Activated CD4-positive, alpha-beta T cell treated with anti-CD3 and anti-CD28 coated beads, Interleukin-2, amount 10 ng/mL, durations not matched to agents 24 days and 14 days (primary cell): ENCODE measurements at regions of chr6 and their contacts with region 1.

Region 1: DNA sequence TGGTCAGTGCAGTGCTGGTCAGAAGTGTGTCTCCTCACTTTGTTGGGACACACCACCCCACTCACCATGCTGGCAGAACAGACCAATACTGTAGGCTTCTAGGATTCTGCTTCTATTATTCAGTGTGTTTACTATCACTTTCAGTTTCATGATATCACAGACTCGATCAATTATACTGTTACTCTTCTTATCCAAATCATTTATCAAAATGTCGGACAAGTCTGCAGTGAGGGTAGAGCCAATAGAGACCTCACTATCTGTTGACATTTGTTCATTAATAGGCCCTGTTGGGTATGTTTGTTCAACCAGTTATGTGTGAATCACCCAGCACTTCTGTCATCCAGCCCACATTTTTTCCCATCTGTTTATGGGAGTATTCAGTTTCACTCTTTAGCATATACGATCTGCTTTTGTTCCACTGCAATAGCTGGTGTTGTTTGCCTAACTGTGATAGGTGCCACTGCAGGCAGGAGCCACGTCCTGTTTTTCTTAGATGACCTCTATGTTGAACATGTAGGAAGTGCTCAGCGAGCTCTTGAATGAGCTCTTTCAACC is 140.1 kb downstream of the NRN1 start:
- DNase-seq: peak; percentile 71
- H3K4me3 Mint-ChIP-seq: peak overlapping the region; percentile 76
- H3K27ac Mint-ChIP-seq: peak overlapping the region; percentile 85
- H3K4me1 Mint-ChIP-seq: peaks cover 37% of the 10 kb centered on the region
- H3K27me3 Mint-ChIP-seq: no peaks in the 10 kb centered on the region

Region 2: GRCh38 chr6:5584078-5584482 is 282.5 kb before region 1 on chr6:
- intact Hi-C with region 1: no loop called
- DNase-seq: no peak
- H3K4me3 Mint-ChIP-seq: no peak overlapping the region
- H3K27ac Mint-ChIP-seq: no peak overlapping the region
- H3K4me1 Mint-ChIP-seq: peaks cover 9% of the 10 kb centered on the region
- H3K27me3 Mint-ChIP-seq: no peaks in the 10 kb centered on the region

Region 3: GRCh38 chr6:5626727-5627426 is 239.7 kb before region 1 on chr6:
- intact Hi-C with region 1: loop called (anchors 10 kb)
- DNase-seq: peak; percentile 70
- H3K4me3 Mint-ChIP-seq: peak overlapping the region; percentile 62
- H3K27ac Mint-ChIP-seq: peak overlapping the region; percentile 61
- H3K4me1 Mint-ChIP-seq: peaks cover 23% of the 10 kb centered on the region
- H3K27me3 Mint-ChIP-seq: peaks cover 5% of the 10 kb centered on the region

Region 4: GRCh38 chr6:5814116-5814515 is 52.5 kb before region 1 on chr6:
- intact Hi-C with region 1: no loop called
- DNase-seq: no peak
- H3K4me3 Mint-ChIP-seq: no peak overlapping the region
- H3K27ac Mint-ChIP-seq: no peak overlapping the region
- H3K4me1 Mint-ChIP-seq: peaks cover 13% of the 10 kb centered on the region
- H3K27me3 Mint-ChIP-seq: peaks cover 4% of the 10 kb centered on the region

Region 5: DNA sequence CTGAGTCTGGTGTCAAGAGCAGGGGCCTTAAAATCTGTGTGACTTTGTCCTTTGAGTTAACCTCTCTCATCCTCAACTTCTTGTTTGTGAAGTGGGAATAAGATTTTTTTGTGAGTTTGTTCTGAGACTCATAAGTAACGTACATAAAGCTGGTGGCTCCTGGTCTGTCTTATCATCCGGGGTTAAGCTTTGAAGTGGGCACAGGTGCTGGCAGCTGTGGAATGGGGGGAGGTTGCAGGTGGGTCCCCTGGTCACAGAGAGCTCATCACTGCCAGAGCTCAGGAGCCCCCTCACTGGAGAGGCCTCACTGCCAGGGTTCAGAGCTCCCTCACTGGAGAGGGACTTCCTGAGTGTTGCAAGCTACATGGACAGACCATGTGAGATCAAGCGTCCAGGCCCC is 34.0 kb before region 1 on chr6:
- intact Hi-C with region 1: loop called (anchors 5 kb)
- DNase-seq: no peak
- H3K4me3 Mint-ChIP-seq: peak overlapping the region; percentile 40
- H3K27ac Mint-ChIP-seq: peak overlapping the region; percentile 90
- H3K4me1 Mint-ChIP-seq: peaks cover 29% of the 10 kb centered on the region
- H3K27me3 Mint-ChIP-seq: no peaks in the 10 kb centered on the region

Region 6: DNA sequence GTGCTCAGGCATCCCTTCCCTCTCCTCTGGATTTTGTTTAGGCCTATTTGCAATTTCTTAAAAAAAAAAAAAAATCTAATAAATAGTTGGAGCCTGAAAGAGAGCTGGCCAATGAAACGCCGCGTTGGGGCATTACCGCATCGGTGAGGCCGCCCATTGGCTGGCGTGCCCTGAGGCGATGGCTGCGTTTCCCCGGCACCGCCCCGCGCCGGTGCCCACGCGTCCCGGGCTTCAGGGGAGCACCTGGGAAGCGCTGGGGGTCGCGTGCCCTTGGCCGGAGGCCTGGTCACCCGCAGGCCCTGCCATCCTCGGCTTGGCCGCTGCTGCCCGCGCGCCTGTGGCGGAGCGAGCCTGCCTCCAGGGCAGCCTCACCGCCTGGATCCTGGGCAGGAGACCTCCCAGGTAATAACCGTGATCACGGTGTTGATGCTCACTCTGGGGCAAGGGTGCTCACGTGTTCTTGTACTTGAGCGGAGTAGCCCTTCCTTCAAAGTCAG is 15.3 kb before region 1 on chr6:
- intact Hi-C with region 1: loop called (anchors 2 kb)
- DNase-seq: peak; percentile 91
- H3K4me3 Mint-ChIP-seq: peak overlapping the region; percentile 78
- H3K27ac Mint-ChIP-seq: no peak overlapping the region
- H3K4me1 Mint-ChIP-seq: peaks cover 9% of the 10 kb centered on the region
- H3K27me3 Mint-ChIP-seq: peaks cover 20% of the 10 kb centered on the region

Region 7: GRCh38 chr6:5995949-5996713 is 129.5 kb after region 1 on chr6:
- intact Hi-C with region 1: loop called (anchors 5 kb)
- DNase-seq: peak; percentile 72
- H3K4me3 Mint-ChIP-seq: peak overlapping the region; percentile 88
- H3K27ac Mint-ChIP-seq: peak overlapping the region; percentile 45
- H3K4me1 Mint-ChIP-seq: peaks cover 45% of the 10 kb centered on the region
- H3K27me3 Mint-ChIP-seq: peaks cover 85% of the 10 kb centered on the region

Region 8: GRCh38 chr6:6315660-6316059 is 449.0 kb after region 1 on chr6:
- intact Hi-C with region 1: no loop called
- DNase-seq: peak; percentile 75
- H3K4me3 Mint-ChIP-seq: no peak overlapping the region
- H3K27ac Mint-ChIP-seq: no peak overlapping the region
- H3K4me1 Mint-ChIP-seq: no peaks in the 10 kb centered on the region
- H3K27me3 Mint-ChIP-seq: peaks cover 36% of the 10 kb centered on the region